SK-N-SH (cell line): ENCODE measurements at regions of chr22 and their contacts with region 1.

Region 1: GRCh38 chr22:32202539-32203180 is 2.2 kb downstream of the RFPL2 start:
- DNase-seq: peak; percentile 78
- H3K4me3 ChIP-seq: peak overlapping the region; percentile 56 to 58
- H3K27ac ChIP-seq: no peak overlapping the region
- H3K4me1 ChIP-seq: peaks cover 0 to 38% of the 10 kb centered on the region in 2 experiments; a peak in 1 of 4 replicates
- H3K27me3 ChIP-seq: peaks cover 18% of the 10 kb centered on the region; the same call in 1 of the 2 replicates
- CTCF ChIP-seq: peak; percentile 64
- EP300 ChIP-seq: 0 out of 4 replicates have a peak, but pooled peaks of 1 of the 2 experiments have one; percentile 26
- RAD21 ChIP-seq: peak; percentile 65

Region 2: DNA sequence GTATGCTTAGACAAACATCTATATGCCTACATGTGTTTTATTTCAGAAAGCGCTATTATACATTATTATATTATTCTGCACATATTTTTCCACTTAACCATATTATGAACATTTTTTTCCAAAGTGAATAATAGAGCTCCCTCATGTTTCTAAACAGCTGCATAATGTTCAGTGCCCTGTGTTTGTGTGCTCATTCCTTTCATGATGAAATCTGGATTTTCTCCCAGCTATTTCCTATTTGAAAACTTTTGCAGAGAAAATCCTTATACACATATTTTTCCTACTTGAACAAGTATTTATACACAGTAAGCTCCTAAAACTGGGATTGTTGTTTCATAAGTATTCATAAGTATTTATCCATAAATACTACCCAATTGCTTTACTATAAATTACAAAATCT is 20.3 kb after region 1 on chr22:
- CTCF ChIA-PET with region 1: interaction called, 10 read pairs
- POLR2A ChIA-PET with region 1: no interaction called
- DNase-seq: no peak
- H3K4me3 ChIP-seq: no peak overlapping the region
- H3K27ac ChIP-seq: no peak overlapping the region
- H3K4me1 ChIP-seq: no peaks in the 10 kb centered on the region
- H3K27me3 ChIP-seq: no peaks in the 10 kb centered on the region
- CTCF ChIP-seq: no peak
- EP300 ChIP-seq: no peak
- RAD21 ChIP-seq: no peak